PC-3 (cell line): ENCODE measurements at regions of chr6 and their contacts with region 1.

Region 1: DNA sequence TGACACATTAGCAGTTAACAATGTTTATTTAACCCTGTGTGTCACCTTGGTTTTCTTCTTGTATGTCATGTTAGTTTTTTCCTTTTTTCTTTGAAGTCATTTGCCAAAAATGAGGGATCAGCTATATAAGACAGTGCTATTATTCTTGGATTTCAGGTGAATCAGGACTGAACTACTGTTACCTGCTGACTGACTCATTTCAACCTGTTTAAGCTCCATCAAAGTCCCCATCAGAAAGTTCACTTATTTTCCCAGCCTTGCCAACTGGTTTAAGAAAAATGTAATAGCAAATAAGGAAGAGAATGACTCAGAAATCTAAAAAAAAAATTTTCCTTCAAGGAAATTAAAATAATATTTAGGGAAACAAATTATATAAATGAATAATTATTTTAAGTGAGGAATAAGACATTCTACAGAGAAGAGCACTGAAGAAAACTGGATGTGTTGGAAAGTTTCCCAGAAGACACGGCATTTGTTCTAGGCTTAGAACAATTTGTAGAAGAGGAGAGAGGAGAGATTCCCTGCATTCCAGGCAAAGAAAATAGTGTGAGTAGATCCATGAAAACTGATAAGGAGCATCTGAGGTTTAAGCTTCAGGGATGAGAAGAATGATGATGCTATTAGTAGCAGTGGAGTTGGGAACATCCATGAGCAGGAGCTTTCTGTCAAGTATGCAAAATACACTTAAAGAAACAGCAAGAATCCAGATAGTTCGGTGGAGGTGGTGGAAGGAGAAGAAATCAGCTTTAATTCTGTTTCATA is 84.9 kb upstream of the SIM1 start:
- DNase-seq: peak; percentile 73
- ATAC-seq: peak; percentile 88
- H3K4me3 ChIP-seq: no peak overlapping the region
- H3K27ac ChIP-seq: peak overlapping the region; percentile 59
- H3K4me1 ChIP-seq: peaks cover 11% of the 10 kb centered on the region
- H3K27me3 ChIP-seq: no peaks in the 10 kb centered on the region
- CTCF ChIP-seq: no peak

Region 2: GRCh38 chr6:100504786-100505737 is 44.5 kb before region 1 on chr6:
- CTCF ChIA-PET with region 1: no interaction called
- POLR2A ChIA-PET with region 1: no interaction called
- intact Hi-C with region 1: loop called (anchors 5 kb)
- DNase-seq: peak; percentile 83
- ATAC-seq: peak; percentile 95
- H3K4me3 ChIP-seq: peak overlapping the region; percentile 26
- H3K27ac ChIP-seq: peak overlapping the region; percentile 71
- H3K4me1 ChIP-seq: peaks cover 46% of the 10 kb centered on the region
- H3K27me3 ChIP-seq: no peaks in the 10 kb centered on the region
- CTCF ChIP-seq: no peak